Activated CD4-positive, alpha-beta T cell treated with anti-CD3 and anti-CD28 coated beads for 36 hours (primary cell): ENCODE measurements at regions of chr2 and their contacts with region 1.

Region 1: GRCh38 chr2:63544017-63544627 is 44.2 kb downstream of the WDPCP start:
- DNase-seq: no peak
- ATAC-seq: no peak
- H3K4me3 Mint-ChIP-seq: no peak overlapping the region
- H3K27ac Mint-ChIP-seq: no peak overlapping the region
- H3K4me1 Mint-ChIP-seq: no peaks in the 10 kb centered on the region
- H3K27me3 Mint-ChIP-seq: no peaks in the 10 kb centered on the region

Region 2: GRCh38 chr2:62794791-62795190 is 749.3 kb before region 1 on chr2:
- CTCF ChIA-PET with region 1: no interaction called
- POLR2A ChIA-PET with region 1: no interaction called
- intact Hi-C with region 1: loop called in 1 of 2 experiments (anchors 5 kb)
- DNase-seq: no peak
- ATAC-seq: no peak
- H3K4me3 Mint-ChIP-seq: no peak overlapping the region
- H3K27ac Mint-ChIP-seq: no peak overlapping the region
- H3K4me1 Mint-ChIP-seq: peaks cover 5% of the 10 kb centered on the region
- H3K27me3 Mint-ChIP-seq: no peaks in the 10 kb centered on the region

Region 3: GRCh38 chr2:63226297-63226696 is 317.8 kb before region 1 on chr2:
- CTCF ChIA-PET with region 1: no interaction called
- POLR2A ChIA-PET with region 1: no interaction called
- intact Hi-C with region 1: no loop called
- DNase-seq: no peak
- ATAC-seq: no peak
- H3K4me3 Mint-ChIP-seq: no peak overlapping the region
- H3K27ac Mint-ChIP-seq: no peak overlapping the region
- H3K4me1 Mint-ChIP-seq: no peaks in the 10 kb centered on the region
- H3K27me3 Mint-ChIP-seq: no peaks in the 10 kb centered on the region